ENCODE measurements at regions of chr10 and their contacts with region 1.

Region 1: DNA sequence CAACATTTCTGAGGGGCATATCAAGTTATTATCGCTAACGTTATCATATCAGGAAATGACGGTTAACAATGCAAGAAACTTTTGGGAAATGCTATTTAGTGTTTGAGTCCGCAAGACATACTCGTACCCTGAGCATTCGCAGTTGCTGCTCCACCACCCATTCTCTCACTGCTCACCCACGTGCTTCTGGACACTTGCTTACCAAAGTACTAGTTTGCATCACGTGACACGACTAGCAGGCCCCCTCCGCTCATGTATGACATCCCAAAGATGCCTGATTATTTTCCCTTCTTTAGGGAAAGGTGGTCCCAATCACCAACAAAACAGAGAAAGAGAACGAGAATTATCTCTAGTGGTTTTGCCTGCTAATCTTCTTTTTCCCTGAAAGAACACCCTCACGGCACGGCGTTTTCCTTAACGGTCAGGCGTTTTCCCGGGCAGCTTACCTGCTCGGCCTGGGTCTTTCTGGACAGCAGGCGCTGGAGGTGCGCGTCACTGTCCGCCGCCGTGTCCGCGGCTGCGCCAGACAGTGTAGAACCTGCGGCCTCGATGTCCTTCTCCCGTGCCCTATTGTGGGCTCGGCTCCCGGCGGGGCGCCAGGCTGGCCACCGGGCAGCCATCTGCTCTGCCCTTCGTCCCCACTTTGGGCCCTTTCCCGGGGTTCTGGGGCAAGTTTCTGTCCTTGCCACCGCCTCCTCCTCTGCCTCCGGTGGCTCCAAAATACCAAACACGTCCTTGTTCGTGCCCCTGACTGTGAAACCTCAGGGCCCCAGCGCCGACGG is at the start of gene SUPV3L1:
- DNase-seq: peak; percentile 91 to 97 (median 91)
- ATAC-seq: peak; percentile 96 to 98 (median 97)
- H3K4me3 ChIP-seq: peak within 1 kb of the TSS; percentile 82 to 99 (median 94)
- H3K27ac ChIP-seq: peak within 1 kb of the TSS; percentile 84 to 98 (median 94)
- H3K4me1 ChIP-seq: peaks cover 0 to 38% (median 26%) of the 10 kb centered on the region in 12 donors
- H3K27me3 ChIP-seq: no peaks in the 10 kb centered on the region
- CTCF ChIP-seq: no peak
- POLR2A ChIP-seq: peak; percentile 43 to 62
- total RNA-seq, gene SUPV3L1: 26.6 to 53.4 (median 34.9) TPM

Region 2: DNA sequence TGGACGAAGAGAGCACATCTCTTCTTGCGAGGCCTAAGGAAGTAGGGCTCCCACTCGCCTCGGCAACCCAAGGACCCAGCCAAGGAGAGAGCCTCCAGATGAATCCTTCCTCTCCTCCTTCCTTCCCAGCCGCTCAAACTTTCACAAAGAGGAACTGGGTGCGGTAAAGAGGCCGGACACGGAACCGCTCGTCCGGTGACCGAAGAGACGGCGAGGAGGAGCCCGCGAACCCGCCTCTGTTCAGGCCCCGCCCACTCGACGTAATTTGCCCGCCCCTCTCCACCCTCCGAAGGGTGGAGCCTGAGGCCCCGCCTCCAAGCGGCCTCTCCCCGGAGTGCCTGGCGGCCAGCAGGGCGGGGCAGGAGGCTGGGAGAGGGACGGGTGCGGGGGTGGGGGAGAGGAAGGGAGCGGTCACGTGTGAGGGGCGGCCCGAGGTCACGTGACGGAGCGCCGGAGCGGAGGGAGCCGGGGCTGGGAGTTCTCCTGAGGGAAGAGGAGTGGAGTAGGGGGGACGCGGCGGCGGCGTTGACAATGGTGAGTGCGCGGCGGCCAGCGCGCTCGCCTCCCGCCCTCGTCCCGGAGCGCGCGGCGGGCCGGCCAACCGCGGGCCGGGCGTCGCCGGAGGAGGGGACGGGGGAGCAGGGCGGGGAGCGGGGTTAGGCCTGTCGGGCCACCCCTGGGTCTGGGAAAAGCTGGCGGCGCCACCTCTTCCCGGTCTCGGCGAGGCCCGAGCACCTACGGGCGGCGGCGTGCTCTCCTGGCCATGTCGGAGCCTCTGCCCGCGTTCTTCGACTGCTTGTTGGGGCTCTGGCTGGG is 56.0 kb before region 1 on chr10 and contains the start of gene VPS26A:
- intact Hi-C with region 1: loop called in 2 of 10 experiments (anchors 1 to 2 kb)
- DNase-seq: peak; percentile 99 to 100 (median 99)
- ATAC-seq: peak; percentile 98 to 99 (median 99)
- H3K4me3 ChIP-seq: peak within 1 kb of the TSS; percentile 50 to 100 (median 96)
- H3K27ac ChIP-seq: peak within 1 kb of the TSS; percentile 91 to 99 (median 96)
- H3K4me1 ChIP-seq: peaks cover 0 to 38% (median 16%) of the 10 kb centered on the region in 12 donors
- H3K27me3 ChIP-seq: no peaks in the 10 kb centered on the region
- CTCF ChIP-seq: peak in 7 of 12 donors; percentile 10 to 59 (median 36)
- POLR2A ChIP-seq: peak; percentile 80 to 95
- total RNA-seq, gene VPS26A: 15.5 to 42.3 (median 34.8) TPM

Region 3: DNA sequence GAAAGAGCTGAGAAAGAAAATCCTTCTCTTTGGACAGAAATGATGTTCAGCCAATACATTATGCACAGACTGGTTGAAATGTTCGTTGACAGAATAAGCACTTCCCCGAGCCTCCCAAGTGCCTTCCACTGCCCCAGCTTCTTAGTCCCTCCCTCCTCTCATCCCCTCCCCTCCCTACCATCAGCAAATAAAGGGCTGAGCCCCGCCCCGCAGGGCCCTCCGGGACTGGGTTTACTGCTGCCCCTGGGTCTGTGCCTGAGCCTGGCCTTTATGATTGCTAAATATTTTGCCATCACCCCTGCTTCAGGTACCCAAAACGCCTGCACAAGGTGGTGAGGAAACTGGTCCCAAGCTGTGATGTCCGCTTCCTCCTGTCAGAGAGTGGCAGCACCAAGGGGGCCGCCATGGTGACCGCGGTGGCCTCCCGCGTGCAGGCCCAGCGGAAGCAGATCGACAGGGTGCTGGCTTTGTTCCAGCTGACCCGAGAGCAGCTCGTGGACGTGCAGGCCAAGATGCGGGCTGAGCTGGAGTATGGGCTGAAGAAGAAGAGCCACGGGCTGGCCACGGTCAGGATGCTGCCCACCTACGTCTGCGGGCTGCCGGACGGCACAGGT is 68.3 kb after region 1 on chr10:
- intact Hi-C with region 1: no loop called
- DNase-seq: no peak
- ATAC-seq: no peak
- H3K4me3 ChIP-seq: no peak overlapping the region
- H3K27ac ChIP-seq: no peak overlapping the region
- H3K4me1 ChIP-seq: no peaks in the 10 kb centered on the region
- H3K27me3 ChIP-seq: no peaks in the 10 kb centered on the region
- CTCF ChIP-seq: no peak
- POLR2A ChIP-seq: no peak

Measured in heart left ventricle (tissue), 16 donors.